HepG2 (cell line): ENCODE measurements at regions of chr3 and their contacts with region 1.

Region 1: GRCh38 chr3:24521420-24522145 is 26.9 kb upstream of the THRB start:
- DNase-seq: peak; percentile 36
- ATAC-seq: peak; percentile 72
- H3K4me3 ChIP-seq: peak overlapping the region; percentile 82 to 93 (median 85)
- H3K27ac ChIP-seq: peak overlapping the region; percentile 92
- H3K4me1 ChIP-seq: peaks cover 65% of the 10 kb centered on the region
- H3K27me3 ChIP-seq: no peaks in the 10 kb centered on the region; a peak in 1 of 5 replicates
- CTCF ChIP-seq: peak; percentile 34
- EP300 ChIP-seq: no peak
- POLR2A ChIP-seq: peak in 1 of 2 experiments; percentile 30
- RAD21 ChIP-seq: peak; percentile 62

Region 2: DNA sequence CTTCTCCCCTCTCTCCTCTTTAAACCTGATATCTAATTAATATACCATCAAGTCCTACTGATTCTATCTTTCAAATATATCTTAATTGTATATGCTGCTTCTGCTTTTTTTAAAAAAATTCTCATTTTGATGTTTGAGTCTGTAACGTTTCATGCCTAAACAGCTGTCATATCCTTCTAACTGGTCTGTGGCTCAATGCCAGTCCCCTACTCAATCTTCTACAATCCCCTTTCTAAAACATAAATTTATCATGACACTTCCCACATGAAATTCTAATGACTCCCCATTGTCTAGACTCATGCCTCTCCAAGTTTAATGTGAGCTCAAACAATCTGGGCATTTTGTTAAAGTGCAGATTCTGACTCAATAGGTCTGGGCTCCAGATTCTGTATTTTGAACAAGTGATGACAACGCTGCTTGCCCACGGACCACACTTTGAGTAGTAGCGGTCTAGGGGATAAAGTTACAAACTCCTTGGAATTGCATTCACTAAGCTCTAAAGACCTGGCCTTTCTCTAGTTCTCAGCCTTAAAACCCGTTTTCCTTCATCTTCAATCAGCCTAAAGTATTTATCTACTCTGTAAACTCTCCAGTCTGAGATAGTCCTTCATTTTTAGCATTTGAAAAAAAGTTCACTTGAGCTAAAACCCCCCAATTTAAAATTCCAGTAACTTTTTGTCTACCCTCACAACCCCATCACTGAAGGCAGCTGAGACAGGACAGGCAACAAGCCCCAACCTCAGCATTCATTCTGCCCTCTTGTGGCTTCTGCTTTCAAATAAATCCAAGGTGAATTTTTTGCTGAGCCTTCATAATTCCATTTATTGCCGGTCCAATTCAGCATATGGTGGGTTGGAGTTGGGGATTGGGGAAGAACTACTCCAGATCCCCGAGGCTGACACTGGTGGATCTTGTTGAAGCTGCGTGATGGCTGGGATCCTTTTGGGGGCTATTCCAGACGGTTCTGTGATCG is 61.1 kb after region 1 on chr3:
- CTCF ChIA-PET with region 1: no interaction called
- POLR2A ChIA-PET with region 1: no interaction called
- in situ Hi-C with region 1: no loop called
- intact Hi-C with region 1: loop called (anchors 2 kb)
- DNase-seq: peak; percentile 30
- ATAC-seq: peak; percentile 63
- H3K4me3 ChIP-seq: no peak overlapping the region
- H3K27ac ChIP-seq: no peak overlapping the region
- H3K4me1 ChIP-seq: peaks cover 4% of the 10 kb centered on the region; the same call in 1 of the 2 replicates
- H3K27me3 ChIP-seq: peaks cover 0 to 4% of the 10 kb centered on the region in 2 experiments; a peak in 2 of 5 replicates
- CTCF ChIP-seq: peak; percentile 60
- EP300 ChIP-seq: no peak
- POLR2A ChIP-seq: no peak
- RAD21 ChIP-seq: peak; percentile 22; the same call in 1 of the 2 replicates

Region 3: DNA sequence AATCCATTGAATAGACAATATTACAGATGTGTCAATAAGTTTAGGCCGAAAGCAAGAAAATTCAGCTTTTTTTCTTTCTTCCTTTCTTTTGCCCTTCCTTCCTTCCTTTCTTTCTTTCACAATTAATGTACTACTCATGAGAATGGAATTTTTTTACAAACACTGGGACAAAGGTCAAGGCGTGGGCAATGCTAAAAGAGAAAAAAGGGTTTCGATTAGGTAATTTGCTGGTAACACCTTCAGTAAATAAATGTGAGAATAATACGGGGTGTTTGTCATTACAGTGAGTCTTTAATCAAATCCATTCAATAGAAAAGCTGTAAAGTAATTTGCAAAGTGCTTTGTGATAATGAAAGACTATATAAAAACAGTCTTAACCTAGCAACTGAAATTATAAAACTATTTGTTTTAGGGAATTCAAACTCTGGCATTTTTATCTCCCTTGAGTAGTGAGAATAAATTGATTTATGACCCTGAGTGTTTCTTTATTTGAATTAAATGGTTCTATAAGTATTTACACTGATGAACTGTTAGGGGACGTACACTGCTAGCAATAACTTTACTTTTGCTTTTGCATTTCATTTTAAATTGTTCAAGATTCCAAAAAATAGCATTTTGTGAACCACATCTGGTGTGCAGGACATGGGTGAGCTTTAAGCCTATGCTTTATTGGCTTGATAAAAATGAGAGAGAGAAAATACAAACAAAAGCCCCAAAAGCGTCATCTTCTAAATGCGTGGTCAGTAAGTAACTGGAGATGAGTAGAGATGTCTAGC is 77.3 kb after region 1 on chr3:
- CTCF ChIA-PET with region 1: no interaction called
- POLR2A ChIA-PET with region 1: no interaction called
- in situ Hi-C with region 1: no loop called
- intact Hi-C with region 1: no loop called
- DNase-seq: peak; percentile 42
- ATAC-seq: no peak
- H3K4me3 ChIP-seq: no peak overlapping the region
- H3K27ac ChIP-seq: no peak overlapping the region
- H3K4me1 ChIP-seq: peaks cover 13% of the 10 kb centered on the region
- H3K27me3 ChIP-seq: no peaks in the 10 kb centered on the region
- CTCF ChIP-seq: no peak
- EP300 ChIP-seq: peak in 1 of 2 experiments; percentile 19; a peak in 1 of 4 replicates
- POLR2A ChIP-seq: no peak
- RAD21 ChIP-seq: no peak